CD14-positive monocyte (primary cell): ENCODE measurements at regions of chr3 and their contacts with region 1.

Region 1: GRCh38 chr3:53195602-53196574 is 34.9 kb downstream of the PRKCD start:
- DNase-seq: peak; percentile 50 to 68 (median 54)
- H3K4me3 ChIP-seq: peak overlapping the region in 1 of 3 experiments; percentile 15
- H3K4me3 Mint-ChIP-seq: no peak overlapping the region
- H3K27ac ChIP-seq: peak overlapping the region; percentile 77 to 78
- H3K27ac Mint-ChIP-seq: peak overlapping the region; percentile 80 to 93 (median 90)
- H3K4me1 ChIP-seq: peaks cover 21 to 27% of the 10 kb centered on the region in 2 donors
- H3K4me1 Mint-ChIP-seq: peaks cover 33% of the 10 kb centered on the region
- H3K27me3 ChIP-seq: no peaks in the 10 kb centered on the region
- H3K27me3 Mint-ChIP-seq: peaks cover 0 to 3% (median 3%) of the 10 kb centered on the region in 3 donors
- CTCF ChIP-seq: peak; percentile 100

Region 2: GRCh38 chr3:53114011-53114400 is 81.9 kb before region 1 on chr3:
- intact Hi-C with region 1: loop called (anchors 1 to 5 kb)
- DNase-seq: peak; percentile 77 to 85 (median 81)
- H3K4me3 ChIP-seq: peak overlapping the region in 1 of 3 experiments; percentile 13
- H3K4me3 Mint-ChIP-seq: no peak overlapping the region
- H3K27ac ChIP-seq: peak overlapping the region in 1 of 2 donors; percentile 70
- H3K27ac Mint-ChIP-seq: no peak overlapping the region
- H3K4me1 ChIP-seq: peaks cover 37 to 38% of the 10 kb centered on the region in 2 donors
- H3K4me1 Mint-ChIP-seq: peaks cover 15% of the 10 kb centered on the region
- H3K27me3 ChIP-seq: no peaks in the 10 kb centered on the region
- H3K27me3 Mint-ChIP-seq: no peaks in the 10 kb centered on the region
- CTCF ChIP-seq: peak; percentile 95

Region 3: GRCh38 chr3:53170325-53171063 is 25.4 kb before region 1 on chr3:
- intact Hi-C with region 1: no loop called
- DNase-seq: peak in 2 of 3 donors; percentile 65 to 86
- H3K4me3 ChIP-seq: peak overlapping the region; percentile 47 to 93 (median 63)
- H3K4me3 Mint-ChIP-seq: peak overlapping the region; percentile 94 to 96
- H3K27ac ChIP-seq: peak overlapping the region; percentile 78 to 93
- H3K27ac Mint-ChIP-seq: peak overlapping the region; percentile 91 to 99 (median 97)
- H3K4me1 ChIP-seq: peaks cover 98 to 100% of the 10 kb centered on the region in 2 donors
- H3K4me1 Mint-ChIP-seq: peaks cover 96% of the 10 kb centered on the region
- H3K27me3 ChIP-seq: no peaks in the 10 kb centered on the region
- H3K27me3 Mint-ChIP-seq: peaks cover 0 to 3% (median 0%) of the 10 kb centered on the region in 3 donors
- CTCF ChIP-seq: no peak

Region 4: GRCh38 chr3:53845103-53845880 is 649.4 kb after region 1 on chr3:
- intact Hi-C with region 1: no loop called
- DNase-seq: no peak
- H3K4me3 ChIP-seq: peak overlapping the region; percentile 27 to 76 (median 31)
- H3K4me3 Mint-ChIP-seq: peak overlapping the region; percentile 74 to 92
- H3K27ac ChIP-seq: no peak overlapping the region
- H3K27ac Mint-ChIP-seq: no peak overlapping the region
- H3K4me1 ChIP-seq: peaks cover 8 to 14% of the 10 kb centered on the region in 2 donors
- H3K4me1 Mint-ChIP-seq: peaks cover 9% of the 10 kb centered on the region
- H3K27me3 ChIP-seq: peaks cover 29 to 61% of the 10 kb centered on the region in 2 donors
- H3K27me3 Mint-ChIP-seq: peaks cover 55 to 73% (median 58%) of the 10 kb centered on the region in 3 donors
- CTCF ChIP-seq: no peak